ENCODE measurements at regions of chr2 and their contacts with region 1.

Region 1: GRCh38 chr2:233267516-233268245 is 16.2 kb downstream of the ATG16L1 start:
- DNase-seq: peak; percentile 35
- CTCF ChIP-seq: no peak

Region 2: GRCh38 chr2:233280114-233280693 is 12.5 kb after region 1 on chr2:
- CTCF ChIA-PET with region 1: interaction called, 11 read pairs
- POLR2A ChIA-PET with region 1: no interaction called
- DNase-seq: no peak
- CTCF ChIP-seq: no peak

Region 3: GRCh38 chr2:233303252-233303651 is 35.6 kb after region 1 on chr2:
- CTCF ChIA-PET with region 1: no interaction called
- POLR2A ChIA-PET with region 1: no interaction called
- DNase-seq: no peak
- CTCF ChIP-seq: no peak